Naive thymus-derived CD4-positive, alpha-beta T cell (primary cell): ENCODE measurements at regions of chr5 and their contacts with region 1.

Region 1: DNA sequence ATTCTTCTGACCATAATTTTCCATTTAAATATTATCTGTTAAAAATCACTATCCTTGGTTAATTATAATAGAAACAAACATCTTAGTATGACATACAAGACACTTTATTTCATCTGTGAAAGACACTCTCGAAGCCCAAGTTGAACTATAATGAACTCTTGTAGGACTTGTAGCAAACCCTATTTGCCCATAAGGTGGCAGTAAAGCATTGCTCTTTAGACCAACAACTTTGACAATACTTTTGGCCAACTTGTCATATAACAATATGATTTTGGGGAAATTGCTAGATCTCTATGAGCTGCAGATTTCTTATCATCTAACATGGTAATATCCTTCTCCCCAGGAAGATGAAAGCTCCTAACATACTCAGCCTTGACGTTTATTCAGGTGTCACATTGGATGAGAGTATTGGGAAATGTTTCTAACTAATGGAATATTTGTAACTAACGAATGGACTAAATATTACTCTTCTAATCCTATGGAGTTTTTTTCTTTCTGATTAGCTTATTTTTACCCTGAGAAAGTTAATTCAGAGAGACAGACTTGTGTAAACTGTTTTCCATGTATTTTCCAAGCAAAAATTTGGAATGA is 11.0 kb downstream of the SPINK14 start:
- DNase-seq: peak in 7 of 9 donors; percentile 10 to 53 (median 36)
- ATAC-seq: peak; percentile 75
- H3K4me3 ChIP-seq: no peak overlapping the region
- H3K4me3 Mint-ChIP-seq: no peak overlapping the region
- H3K27ac ChIP-seq: no peak overlapping the region
- H3K27ac Mint-ChIP-seq: no peak overlapping the region
- H3K4me1 ChIP-seq: no peaks in the 10 kb centered on the region
- H3K4me1 Mint-ChIP-seq: peaks cover 0 to 2% (median 0%) of the 10 kb centered on the region in 7 donors
- H3K27me3 ChIP-seq: no peaks in the 10 kb centered on the region
- H3K27me3 Mint-ChIP-seq: peaks cover 11 to 25% (median 12%) of the 10 kb centered on the region in 5 donors

Region 2: DNA sequence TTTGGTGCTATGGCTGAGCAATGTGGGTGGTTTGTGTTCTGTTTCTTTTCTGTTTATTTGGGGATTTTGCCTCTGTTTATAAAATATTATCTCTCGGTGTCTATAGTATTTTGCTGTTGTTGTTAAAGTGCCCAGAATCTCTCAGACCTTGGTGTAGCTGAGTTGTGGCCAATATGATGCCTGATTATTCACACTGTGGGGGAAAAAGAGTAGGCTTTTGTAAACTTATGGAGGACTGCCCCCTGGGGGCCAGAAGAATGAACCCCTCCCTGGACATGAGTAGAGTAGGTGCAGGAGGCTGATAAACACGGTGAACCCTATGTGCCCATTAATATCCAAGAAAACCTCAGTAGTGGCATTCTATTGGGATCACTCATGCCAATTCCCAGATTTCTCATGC is 620.5 kb before region 1 on chr5:
- CTCF ChIA-PET with region 1: no interaction called
- POLR2A ChIA-PET with region 1: no interaction called
- intact Hi-C with region 1: no loop called
- DNase-seq: no peak
- ATAC-seq: peak; percentile 49
- H3K4me3 ChIP-seq: no peak overlapping the region
- H3K4me3 Mint-ChIP-seq: no peak overlapping the region
- H3K27ac ChIP-seq: no peak overlapping the region
- H3K27ac Mint-ChIP-seq: no peak overlapping the region
- H3K4me1 ChIP-seq: no peaks in the 10 kb centered on the region
- H3K4me1 Mint-ChIP-seq: no peaks in the 10 kb centered on the region
- H3K27me3 ChIP-seq: no peaks in the 10 kb centered on the region
- H3K27me3 Mint-ChIP-seq: peaks cover 0 to 5% (median 0%) of the 10 kb centered on the region in 5 donors

Region 3: DNA sequence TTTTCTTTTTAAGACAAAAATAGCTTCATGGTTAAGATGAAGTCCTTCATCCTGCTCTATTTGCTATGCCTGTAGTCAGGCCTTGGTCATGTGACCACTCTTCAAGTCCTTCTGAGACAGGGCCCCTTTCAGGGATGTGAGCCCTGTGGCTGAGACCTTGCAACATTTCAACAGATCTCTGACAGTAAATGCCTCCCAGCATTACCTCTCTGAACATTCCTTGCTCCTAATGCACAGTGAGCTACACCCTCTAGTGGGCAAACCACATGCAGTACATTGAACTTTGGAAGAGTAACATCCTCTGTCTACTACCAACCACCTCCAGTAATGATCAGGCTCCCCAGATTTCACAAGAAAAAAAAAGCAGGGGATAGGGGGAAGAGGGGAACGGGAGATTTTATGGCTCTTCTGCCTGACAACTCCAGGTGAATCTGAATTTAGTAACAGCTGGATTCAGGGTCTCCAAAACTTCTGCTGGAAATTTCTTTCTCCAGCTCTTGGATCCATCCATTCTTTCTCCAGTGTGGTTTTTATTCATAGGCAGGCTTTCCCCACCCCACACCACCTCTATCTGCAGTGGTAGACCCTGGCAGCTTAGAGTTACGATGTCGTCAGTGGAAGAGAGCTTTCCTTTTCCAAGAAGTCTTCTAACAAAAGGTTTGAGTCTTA is 195.5 kb after region 1 on chr5:
- CTCF ChIA-PET with region 1: interaction called, 4 read pairs
- POLR2A ChIA-PET with region 1: no interaction called
- intact Hi-C with region 1: loop called (anchors 1 kb)
- DNase-seq: peak in 6 of 9 donors; percentile 20 to 38 (median 24)
- ATAC-seq: peak; percentile 84
- H3K4me3 ChIP-seq: no peak overlapping the region
- H3K4me3 Mint-ChIP-seq: no peak overlapping the region
- H3K27ac ChIP-seq: no peak overlapping the region
- H3K27ac Mint-ChIP-seq: no peak overlapping the region
- H3K4me1 ChIP-seq: peaks cover 0 to 5% of the 10 kb centered on the region in 2 donors
- H3K4me1 Mint-ChIP-seq: peaks cover 0 to 16% (median 11%) of the 10 kb centered on the region in 7 donors
- H3K27me3 ChIP-seq: no peaks in the 10 kb centered on the region
- H3K27me3 Mint-ChIP-seq: no peaks in the 10 kb centered on the region

Region 4: DNA sequence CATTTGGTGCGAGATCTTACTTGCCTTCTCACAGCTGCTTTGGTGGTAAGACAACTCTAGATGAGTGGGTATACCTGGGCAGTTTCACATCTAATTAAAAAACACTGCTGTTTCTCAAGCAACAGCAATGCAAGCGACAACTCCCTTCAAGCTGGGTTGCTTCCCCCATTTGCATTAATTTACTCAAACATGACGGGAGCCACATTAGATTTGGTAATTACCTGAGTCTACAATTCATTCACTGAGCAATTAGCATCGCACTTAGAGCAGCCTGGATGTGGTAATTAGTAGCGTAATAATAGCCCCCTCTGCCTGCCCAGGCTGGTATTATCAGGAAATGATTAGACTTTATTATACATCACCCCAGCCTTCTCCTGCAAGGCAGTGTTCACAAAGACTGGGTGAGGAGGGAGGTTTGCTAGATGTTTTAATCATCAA is 277.9 kb after region 1 on chr5:
- CTCF ChIA-PET with region 1: no interaction called
- POLR2A ChIA-PET with region 1: no interaction called
- intact Hi-C with region 1: loop called in 1 of 2 experiments (anchors 1 kb)
- DNase-seq: peak in 2 of 9 donors; percentile 4 to 13
- ATAC-seq: peak; percentile 69
- H3K4me3 ChIP-seq: no peak overlapping the region
- H3K4me3 Mint-ChIP-seq: no peak overlapping the region
- H3K27ac ChIP-seq: no peak overlapping the region
- H3K27ac Mint-ChIP-seq: no peak overlapping the region
- H3K4me1 ChIP-seq: no peaks in the 10 kb centered on the region
- H3K4me1 Mint-ChIP-seq: no peaks in the 10 kb centered on the region
- H3K27me3 ChIP-seq: no peaks in the 10 kb centered on the region
- H3K27me3 Mint-ChIP-seq: peaks cover 10 to 24% (median 16%) of the 10 kb centered on the region in 5 donors

Region 5: DNA sequence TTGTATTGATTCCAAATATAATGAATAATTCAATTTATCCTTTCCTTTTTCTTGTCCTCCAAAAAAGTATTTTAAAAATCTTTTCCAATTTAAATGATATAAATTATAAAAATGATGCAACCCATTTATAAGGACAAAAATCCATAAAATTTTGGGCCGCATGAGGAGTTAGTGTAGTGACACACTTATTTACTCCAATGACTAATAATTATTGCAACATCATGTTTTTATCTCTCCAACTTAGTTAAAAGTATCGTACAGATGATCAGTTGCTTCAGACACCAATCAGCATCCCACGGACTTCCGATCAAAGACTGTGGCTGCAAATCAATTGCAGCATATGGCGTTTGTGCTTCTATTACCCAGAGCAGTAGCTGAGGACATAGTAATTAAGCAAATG is 416.4 kb after region 1 on chr5:
- CTCF ChIA-PET with region 1: no interaction called
- POLR2A ChIA-PET with region 1: no interaction called
- intact Hi-C with region 1: no loop called
- DNase-seq: no peak
- ATAC-seq: no peak
- H3K4me3 ChIP-seq: no peak overlapping the region
- H3K4me3 Mint-ChIP-seq: no peak overlapping the region
- H3K27ac ChIP-seq: no peak overlapping the region
- H3K27ac Mint-ChIP-seq: no peak overlapping the region
- H3K4me1 ChIP-seq: no peaks in the 10 kb centered on the region
- H3K4me1 Mint-ChIP-seq: no peaks in the 10 kb centered on the region
- H3K27me3 ChIP-seq: no peaks in the 10 kb centered on the region
- H3K27me3 Mint-ChIP-seq: peaks cover 5 to 54% (median 20%) of the 10 kb centered on the region in 5 donors

Region 6: GRCh38 chr5:149035372-149035790 is 856.1 kb after region 1 on chr5:
- CTCF ChIA-PET with region 1: interaction called, 3 read pairs
- POLR2A ChIA-PET with region 1: no interaction called
- intact Hi-C with region 1: loop called (anchors 1 to 10 kb)
- DNase-seq: peak; percentile 26 to 65 (median 52)
- ATAC-seq: peak; percentile 80
- H3K4me3 ChIP-seq: no peak overlapping the region
- H3K4me3 Mint-ChIP-seq: no peak overlapping the region
- H3K27ac ChIP-seq: no peak overlapping the region
- H3K27ac Mint-ChIP-seq: no peak overlapping the region
- H3K4me1 ChIP-seq: no peaks in the 10 kb centered on the region
- H3K4me1 Mint-ChIP-seq: peaks cover 0 to 19% (median 0%) of the 10 kb centered on the region in 7 donors
- H3K27me3 ChIP-seq: no peaks in the 10 kb centered on the region
- H3K27me3 Mint-ChIP-seq: peaks cover 0 to 9% (median 5%) of the 10 kb centered on the region in 5 donors